ENCODE measurements at regions of chr4 and their contacts with region 1.

Region 1: DNA sequence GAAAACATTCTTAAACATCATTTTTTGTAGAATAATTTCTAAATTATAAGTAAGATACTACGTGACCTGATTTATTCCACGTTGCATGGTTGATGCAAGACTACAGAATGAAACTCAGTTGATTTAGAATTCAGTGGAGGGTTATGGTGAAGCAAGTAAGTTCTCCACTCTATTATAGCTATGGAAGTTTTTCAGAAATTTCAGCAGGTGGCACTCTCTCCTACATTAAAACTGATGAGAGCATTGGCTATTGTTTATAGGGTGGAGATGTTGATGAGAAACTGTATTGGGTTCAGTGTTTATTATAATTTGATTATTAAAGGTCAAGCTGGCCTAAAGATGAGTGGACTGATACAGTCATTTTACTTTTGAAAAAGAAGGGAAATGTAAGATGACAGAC is 88.0 kb downstream of the FNIP2 start:
- DNase-seq: peak; percentile 68
- ATAC-seq: peak; percentile 92
- H3K4me3 ChIP-seq: no peak overlapping the region
- H3K27ac ChIP-seq: no peak overlapping the region
- H3K4me1 ChIP-seq: no peaks in the 10 kb centered on the region
- H3K27me3 ChIP-seq: no peaks in the 10 kb centered on the region
- CTCF ChIP-seq: peak; percentile 73
- POLR2A ChIP-seq: no peak
- RAD21 ChIP-seq: peak; percentile 79

Region 2: DNA sequence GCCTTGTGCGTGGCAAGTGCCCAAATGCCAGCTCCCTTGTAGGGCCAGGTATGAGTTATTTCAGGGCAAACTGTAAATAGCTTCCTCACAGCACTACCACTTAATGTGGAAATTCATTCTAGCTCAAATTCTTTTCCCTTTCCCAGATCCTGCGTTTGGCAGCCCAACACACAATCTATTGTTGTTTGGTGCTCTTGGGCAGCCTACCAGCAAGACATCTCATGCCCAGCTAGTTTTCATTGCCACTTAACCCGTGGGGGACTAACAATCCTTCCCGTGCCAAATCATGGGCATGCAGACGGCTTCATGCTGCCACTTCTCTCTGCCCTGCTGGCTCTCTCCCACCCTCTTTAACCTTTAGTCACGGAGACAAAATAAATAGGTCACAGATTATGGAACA is 1182.2 kb before region 1 on chr4:
- CTCF ChIA-PET with region 1: no interaction called
- POLR2A ChIA-PET with region 1: no interaction called
- dilution Hi-C with region 1: no loop called
- in situ Hi-C with region 1: no loop called
- intact Hi-C with region 1: no loop called
- DNase-seq: no peak
- ATAC-seq: no peak
- H3K4me3 ChIP-seq: no peak overlapping the region
- H3K27ac ChIP-seq: no peak overlapping the region
- H3K4me1 ChIP-seq: no peaks in the 10 kb centered on the region
- H3K27me3 ChIP-seq: no peaks in the 10 kb centered on the region
- CTCF ChIP-seq: no peak
- POLR2A ChIP-seq: no peak
- RAD21 ChIP-seq: no peak

Region 3: GRCh38 chr4:158193171-158193749 is 663.6 kb before region 1 on chr4:
- CTCF ChIA-PET with region 1: no interaction called
- POLR2A ChIA-PET with region 1: no interaction called
- dilution Hi-C with region 1: no loop called
- in situ Hi-C with region 1: no loop called
- intact Hi-C with region 1: no loop called
- DNase-seq: peak; percentile 31
- ATAC-seq: peak; percentile 66; the same call in 1 of the 2 replicates
- H3K4me3 ChIP-seq: no peak overlapping the region
- H3K27ac ChIP-seq: no peak overlapping the region
- H3K4me1 ChIP-seq: no peaks in the 10 kb centered on the region
- H3K27me3 ChIP-seq: peaks cover 7% of the 10 kb centered on the region; the same call in 1 of the 2 replicates
- CTCF ChIP-seq: peak; percentile 61
- POLR2A ChIP-seq: no peak
- RAD21 ChIP-seq: peak; percentile 46

Region 4: DNA sequence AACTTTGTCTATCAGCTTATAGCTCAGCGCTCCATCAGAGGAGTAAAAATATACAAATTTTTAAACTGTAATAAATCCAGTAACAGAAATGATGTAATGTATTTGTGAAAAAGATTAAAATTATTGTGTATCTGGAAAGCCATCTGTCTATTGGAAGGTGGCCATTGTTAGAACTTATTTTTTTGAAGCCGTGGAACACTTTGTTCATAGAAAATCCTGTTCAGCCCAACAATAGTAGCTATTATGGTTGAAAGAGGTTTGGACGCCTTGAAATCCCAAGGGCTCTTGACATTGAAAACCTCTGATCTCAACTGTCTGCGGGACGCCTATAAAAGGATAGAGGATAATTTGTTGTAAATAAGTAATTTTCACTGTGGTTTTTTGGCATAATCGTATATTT is 344.3 kb after region 1 on chr4:
- CTCF ChIA-PET with region 1: interaction called, 6 read pairs
- POLR2A ChIA-PET with region 1: no interaction called
- dilution Hi-C with region 1: no loop called
- in situ Hi-C with region 1: loop called (anchors 5 kb)
- intact Hi-C with region 1: loop called (anchors 1 kb)
- DNase-seq: no peak
- ATAC-seq: no peak
- H3K4me3 ChIP-seq: no peak overlapping the region
- H3K27ac ChIP-seq: no peak overlapping the region
- H3K4me1 ChIP-seq: no peaks in the 10 kb centered on the region; the same call in 1 of the 2 replicates
- H3K27me3 ChIP-seq: no peaks in the 10 kb centered on the region
- CTCF ChIP-seq: no peak
- POLR2A ChIP-seq: no peak
- RAD21 ChIP-seq: no peak

Region 5: GRCh38 chr4:159206427-159206871 is 349.6 kb after region 1 on chr4:
- CTCF ChIA-PET with region 1: interaction called, 6 read pairs
- POLR2A ChIA-PET with region 1: no interaction called
- dilution Hi-C with region 1: no loop called
- in situ Hi-C with region 1: loop called (anchors 5 kb)
- intact Hi-C with region 1: loop called (anchors 1 kb)
- DNase-seq: peak; percentile 76
- ATAC-seq: peak; percentile 81
- H3K4me3 ChIP-seq: no peak overlapping the region
- H3K27ac ChIP-seq: no peak overlapping the region
- H3K4me1 ChIP-seq: peaks cover 3% of the 10 kb centered on the region
- H3K27me3 ChIP-seq: no peaks in the 10 kb centered on the region
- CTCF ChIP-seq: no peak
- POLR2A ChIP-seq: no peak
- RAD21 ChIP-seq: no peak

Region 6: GRCh38 chr4:159358226-159358625 is 501.4 kb after region 1 on chr4:
- CTCF ChIA-PET with region 1: no interaction called
- POLR2A ChIA-PET with region 1: no interaction called
- dilution Hi-C with region 1: no loop called
- in situ Hi-C with region 1: no loop called
- intact Hi-C with region 1: loop called (anchors 10 kb)
- DNase-seq: peak; percentile 90
- ATAC-seq: peak; percentile 82
- H3K4me3 ChIP-seq: no peak overlapping the region
- H3K27ac ChIP-seq: peak overlapping the region; percentile 81
- H3K4me1 ChIP-seq: peaks cover 13% of the 10 kb centered on the region
- H3K27me3 ChIP-seq: no peaks in the 10 kb centered on the region
- CTCF ChIP-seq: no peak
- POLR2A ChIP-seq: no peak
- RAD21 ChIP-seq: peak; percentile 18; the same call in 1 of the 2 replicates

Measured in IMR-90 (cell line).